ENCODE measurements at regions of chrX and their contacts with region 1.

Region 1: GRCh38 chrX:114075073-114075673 is 508.7 kb upstream of the HTR2C start:
- DNase-seq: no peak
- H3K4me3 Mint-ChIP-seq: no peak overlapping the region
- H3K27ac Mint-ChIP-seq: no peak overlapping the region
- H3K4me1 Mint-ChIP-seq: no peaks in the 10 kb centered on the region
- H3K27me3 Mint-ChIP-seq: no peaks in the 10 kb centered on the region
- CTCF ChIP-seq: no peak

Region 2: DNA sequence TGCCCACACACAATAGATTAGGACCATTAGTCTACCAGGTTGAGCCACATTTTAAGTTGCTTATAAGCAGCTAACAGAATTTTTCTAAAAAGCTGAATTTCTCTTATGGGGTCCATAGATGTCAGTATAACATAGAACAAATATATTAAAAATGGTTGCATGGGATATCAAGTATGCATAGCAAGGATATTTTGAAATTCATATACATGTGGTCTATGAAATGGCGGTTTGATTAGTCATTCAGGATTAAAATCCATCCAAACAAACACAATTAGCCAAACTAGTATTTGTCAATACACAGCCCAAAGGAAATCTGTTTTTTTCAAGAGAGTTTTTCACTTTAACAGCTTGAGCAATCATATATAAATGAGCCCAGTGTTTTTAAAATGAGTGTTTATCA is 1201.0 kb before region 1 on chrX:
- CTCF ChIA-PET with region 1: no interaction called
- intact Hi-C with region 1: loop called (anchors 10 kb)
- DNase-seq: no peak
- H3K4me3 Mint-ChIP-seq: no peak overlapping the region
- H3K27ac Mint-ChIP-seq: no peak overlapping the region
- H3K4me1 Mint-ChIP-seq: no peaks in the 10 kb centered on the region
- H3K27me3 Mint-ChIP-seq: no peaks in the 10 kb centered on the region
- CTCF ChIP-seq: no peak

Region 3: GRCh38 chrX:113929004-113929403 is 146.2 kb before region 1 on chrX:
- CTCF ChIA-PET with region 1: no interaction called
- intact Hi-C with region 1: loop called (anchors 1 kb)
- DNase-seq: peak; percentile 35
- H3K4me3 Mint-ChIP-seq: no peak overlapping the region
- H3K27ac Mint-ChIP-seq: no peak overlapping the region
- H3K4me1 Mint-ChIP-seq: no peaks in the 10 kb centered on the region
- H3K27me3 Mint-ChIP-seq: no peaks in the 10 kb centered on the region
- CTCF ChIP-seq: peak; percentile 29

Region 4: GRCh38 chrX:113947548-113947947 is 127.6 kb before region 1 on chrX:
- CTCF ChIA-PET with region 1: interaction called, 3 read pairs
- intact Hi-C with region 1: loop called (anchors 5 kb)
- DNase-seq: no peak
- H3K4me3 Mint-ChIP-seq: no peak overlapping the region
- H3K27ac Mint-ChIP-seq: no peak overlapping the region
- H3K4me1 Mint-ChIP-seq: no peaks in the 10 kb centered on the region
- H3K27me3 Mint-ChIP-seq: no peaks in the 10 kb centered on the region
- CTCF ChIP-seq: no peak